AG04449 (cell line): ENCODE measurements at regions of chr1 and their contacts with region 1.

Region 1: GRCh38 chr1:216566641-216567205 is 143.5 kb upstream of the USH2A start:
- DNase-seq: peak; percentile 3
- H3K4me3 ChIP-seq: no peak overlapping the region
- CTCF ChIP-seq: peak; percentile 43

Region 2: GRCh38 chr1:216310776-216311175 is 255.9 kb before region 1 on chr1:
- CTCF ChIA-PET with region 1: interaction called, 31 read pairs
- POLR2A ChIA-PET with region 1: no interaction called
- DNase-seq: no peak
- H3K4me3 ChIP-seq: no peak overlapping the region
- CTCF ChIP-seq: peak; percentile 47

Region 3: DNA sequence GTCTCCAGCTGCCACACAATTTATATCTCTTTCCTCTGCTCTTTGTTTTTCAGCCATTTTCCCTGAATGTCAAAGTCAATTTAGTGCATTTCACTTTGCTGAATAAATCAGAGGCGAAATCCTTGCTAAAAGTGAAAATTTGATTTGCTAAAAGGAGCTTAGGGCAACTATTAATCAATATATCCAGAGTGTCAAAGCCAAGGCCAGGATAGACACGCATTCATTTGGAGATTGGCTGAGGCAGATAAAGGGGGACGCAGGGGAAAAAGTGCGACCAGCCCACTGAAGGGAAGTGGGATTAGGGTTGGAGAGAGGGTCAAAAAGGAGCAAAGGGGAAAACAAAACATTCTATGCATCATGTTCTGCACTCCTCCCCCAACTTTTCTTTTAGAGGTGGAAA is 11.1 kb before region 1 on chr1:
- CTCF ChIA-PET with region 1: interaction called, 23 read pairs
- POLR2A ChIA-PET with region 1: no interaction called
- DNase-seq: no peak
- H3K4me3 ChIP-seq: no peak overlapping the region
- CTCF ChIP-seq: no peak